Right lobe of liver (tissue), 6 donors: ENCODE measurements at regions of chr3 and their contacts with region 1.

Region 1: GRCh38 chr3:126259411-126260391 is 79.3 kb upstream of the ALDH1L1 start:
- DNase-seq: peak; percentile 73 to 77 (median 75)
- ATAC-seq: peak; percentile 86 to 91 (median 89)
- H3K4me3 ChIP-seq: peak overlapping the region in 2 of 3 donors; percentile 36 to 48
- H3K27ac ChIP-seq: peak overlapping the region in 2 of 3 donors; percentile 55 to 78
- H3K4me1 ChIP-seq: peaks cover 0 to 12% (median 5%) of the 10 kb centered on the region in 4 donors
- H3K27me3 ChIP-seq: no peaks in the 10 kb centered on the region
- CTCF ChIP-seq: peak; percentile 79 to 96 (median 92)
- POLR2A ChIP-seq: no peak

Region 2: GRCh38 chr3:126352476-126353454 is 93.1 kb after region 1 on chr3:
- intact Hi-C with region 1: loop called (anchors 5 to 10 kb)
- DNase-seq: peak; percentile 80 to 93 (median 93)
- ATAC-seq: peak; percentile 39 to 54 (median 42)
- H3K4me3 ChIP-seq: peak overlapping the region; percentile 32 to 78 (median 73)
- H3K27ac ChIP-seq: peak overlapping the region; percentile 63 to 97 (median 97)
- H3K4me1 ChIP-seq: peaks cover 0 to 38% (median 12%) of the 10 kb centered on the region in 4 donors
- H3K27me3 ChIP-seq: no peaks in the 10 kb centered on the region
- CTCF ChIP-seq: peak in 1 of 4 donors; percentile 9
- POLR2A ChIP-seq: peak; percentile 75

Region 3: GRCh38 chr3:127015282-127016042 is 755.8 kb after region 1 on chr3:
- intact Hi-C with region 1: no loop called
- DNase-seq: no peak
- ATAC-seq: no peak
- H3K4me3 ChIP-seq: no peak overlapping the region
- H3K27ac ChIP-seq: no peak overlapping the region
- H3K4me1 ChIP-seq: no peaks in the 10 kb centered on the region
- H3K27me3 ChIP-seq: no peaks in the 10 kb centered on the region
- CTCF ChIP-seq: no peak
- POLR2A ChIP-seq: no peak